Dorsolateral prefrontal cortex (tissue), 120 donors: ENCODE measurements at regions of chr3 and their contacts with region 1.

Region 1: DNA sequence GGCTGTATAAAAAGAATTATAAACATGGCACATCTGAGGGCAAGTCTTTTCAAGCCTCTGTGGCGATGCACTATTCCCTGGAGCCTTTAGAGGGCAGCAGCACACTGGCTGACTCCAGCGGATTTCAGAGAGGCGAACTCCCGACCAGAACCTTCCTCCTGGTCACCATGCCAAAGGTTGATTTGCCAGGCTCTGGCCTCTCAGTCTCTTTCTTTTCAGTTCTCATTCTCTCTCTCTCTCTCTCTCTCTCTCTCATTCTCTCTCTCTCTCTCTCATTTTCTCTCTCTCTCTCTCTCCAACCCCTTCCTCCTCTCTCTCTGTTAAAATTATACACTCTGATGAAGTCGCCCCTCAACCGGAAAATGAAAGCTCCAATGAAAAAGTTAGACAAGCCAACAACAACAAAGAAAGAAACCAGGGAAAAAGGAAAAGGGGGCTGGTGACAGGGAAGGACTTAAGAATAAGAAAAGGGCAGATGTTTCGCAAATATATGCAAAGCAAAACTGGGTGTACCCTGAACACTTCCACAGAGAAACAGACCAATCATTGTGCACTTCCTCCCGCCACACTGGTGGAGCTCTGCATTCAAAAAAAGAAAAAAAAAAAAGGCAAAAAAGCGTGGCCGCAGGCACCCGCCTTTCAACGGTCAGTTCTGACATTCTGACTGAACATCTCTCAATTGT is 90.2 kb downstream of the TIGIT start:
- DNase-seq: peak; percentile 74 to 91 (median 87)
- H3K4me3 ChIP-seq: peak overlapping the region; percentile 9 to 68 (median 51)
- H3K27ac ChIP-seq: peak overlapping the region; percentile 69 to 95 (median 86)
- H3K27me3 ChIP-seq: no peaks in the 10 kb centered on the region
- CTCF ChIP-seq: peak; percentile 81 to 98 (median 92)

Region 2: GRCh38 chr3:114362815-114363214 is 21.2 kb before region 1 on chr3:
- intact Hi-C with region 1: loop called in 1 of 2 experiments (anchors 2 kb)
- DNase-seq: no peak
- H3K4me3 ChIP-seq: no peak overlapping the region
- H3K27ac ChIP-seq: peak overlapping the region in 41 of 59 donors; percentile 3 to 82 (median 55)
- H3K27me3 ChIP-seq: no peaks in the 10 kb centered on the region
- CTCF ChIP-seq: peak; percentile 44 to 86 (median 71)

Region 3: GRCh38 chr3:114418724-114419543 is 34.9 kb after region 1 on chr3:
- intact Hi-C with region 1: loop called (anchors 1 to 5 kb)
- DNase-seq: no peak
- H3K4me3 ChIP-seq: peak overlapping the region in 34 of 59 donors; percentile 1 to 46 (median 16)
- H3K27ac ChIP-seq: peak overlapping the region in 54 of 59 donors; percentile 0 to 80 (median 55)
- H3K27me3 ChIP-seq: no peaks in the 10 kb centered on the region
- CTCF ChIP-seq: peak; percentile 74 to 98 (median 90)

Region 4: DNA sequence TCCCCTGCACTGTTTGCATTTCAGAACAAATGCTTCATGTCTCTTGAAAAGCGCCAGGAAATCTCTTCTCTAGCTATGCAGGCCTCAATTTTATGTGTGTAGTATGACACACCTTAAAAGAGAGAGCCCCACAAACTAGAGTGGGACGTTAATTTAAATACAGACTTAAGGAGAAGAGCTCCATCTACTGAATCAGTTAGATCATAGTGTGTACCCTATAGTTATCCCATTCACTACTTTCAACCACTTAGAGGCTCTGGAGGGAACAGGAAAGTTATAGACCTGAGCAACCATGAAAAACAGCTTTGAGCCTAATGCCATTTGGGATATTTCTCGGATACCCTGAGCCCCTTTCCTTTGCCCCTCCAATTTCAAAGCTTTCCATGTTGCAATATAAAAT is 63.5 kb after region 1 on chr3:
- intact Hi-C with region 1: loop called (anchors 1 to 5 kb)
- DNase-seq: no peak
- H3K4me3 ChIP-seq: peak overlapping the region in 41 of 59 donors; percentile 0 to 76 (median 26)
- H3K27ac ChIP-seq: peak overlapping the region; percentile 53 to 99 (median 96)
- H3K27me3 ChIP-seq: no peaks in the 10 kb centered on the region
- CTCF ChIP-seq: peak in 38 of 56 donors; percentile 12 to 59 (median 38)

Region 5: GRCh38 chr3:114454551-114455251 is 70.7 kb after region 1 on chr3:
- intact Hi-C with region 1: loop called in 1 of 2 experiments (anchors 5 kb)
- DNase-seq: peak in 4 of 10 donors; percentile 29 to 49 (median 42)
- H3K4me3 ChIP-seq: peak overlapping the region; percentile 31 to 76 (median 59)
- H3K27ac ChIP-seq: peak overlapping the region; percentile 36 to 99 (median 96)
- H3K27me3 ChIP-seq: no peaks in the 10 kb centered on the region
- CTCF ChIP-seq: peak in 1 of 56 donors; percentile 9

Region 6: GRCh38 chr3:114527036-114527644 is 143.1 kb after region 1 on chr3:
- intact Hi-C with region 1: loop called in 1 of 2 experiments (anchors 10 kb)
- DNase-seq: no peak
- H3K4me3 ChIP-seq: no peak overlapping the region
- H3K27ac ChIP-seq: no peak overlapping the region
- H3K27me3 ChIP-seq: no peaks in the 10 kb centered on the region
- CTCF ChIP-seq: peak; percentile 35 to 70 (median 56)

Region 7: DNA sequence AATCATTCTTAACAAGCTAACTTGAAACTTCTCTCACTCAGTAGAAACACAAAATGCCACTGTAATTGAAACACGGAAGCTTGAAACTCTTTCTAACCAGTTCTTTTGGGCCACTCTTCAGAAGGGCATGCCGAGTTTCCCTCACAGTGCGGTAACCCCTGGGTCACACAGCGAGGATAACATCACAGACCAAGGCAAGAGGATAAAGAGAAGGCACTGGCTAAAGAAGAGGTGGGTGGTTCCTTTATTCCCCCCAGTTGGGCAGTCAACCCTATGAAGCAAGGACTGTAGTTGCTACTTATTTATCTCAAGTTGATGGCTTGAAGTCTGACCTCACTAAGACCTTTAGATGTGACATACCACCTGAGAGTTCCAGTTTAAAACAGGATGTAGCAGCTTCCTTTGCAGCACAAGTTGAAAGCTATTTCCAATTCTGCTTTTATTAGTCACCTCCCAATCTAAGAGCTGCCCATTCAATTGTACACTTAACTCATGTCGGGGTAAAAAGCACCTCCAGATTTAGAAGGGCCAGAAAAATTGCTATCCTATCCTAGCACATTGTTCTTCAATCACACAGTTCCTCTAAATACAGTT is 182.2 kb after region 1 on chr3:
- intact Hi-C with region 1: no loop called
- DNase-seq: no peak
- H3K4me3 ChIP-seq: no peak overlapping the region
- H3K27ac ChIP-seq: no peak overlapping the region
- H3K27me3 ChIP-seq: no peaks in the 10 kb centered on the region
- CTCF ChIP-seq: no peak

Region 8: DNA sequence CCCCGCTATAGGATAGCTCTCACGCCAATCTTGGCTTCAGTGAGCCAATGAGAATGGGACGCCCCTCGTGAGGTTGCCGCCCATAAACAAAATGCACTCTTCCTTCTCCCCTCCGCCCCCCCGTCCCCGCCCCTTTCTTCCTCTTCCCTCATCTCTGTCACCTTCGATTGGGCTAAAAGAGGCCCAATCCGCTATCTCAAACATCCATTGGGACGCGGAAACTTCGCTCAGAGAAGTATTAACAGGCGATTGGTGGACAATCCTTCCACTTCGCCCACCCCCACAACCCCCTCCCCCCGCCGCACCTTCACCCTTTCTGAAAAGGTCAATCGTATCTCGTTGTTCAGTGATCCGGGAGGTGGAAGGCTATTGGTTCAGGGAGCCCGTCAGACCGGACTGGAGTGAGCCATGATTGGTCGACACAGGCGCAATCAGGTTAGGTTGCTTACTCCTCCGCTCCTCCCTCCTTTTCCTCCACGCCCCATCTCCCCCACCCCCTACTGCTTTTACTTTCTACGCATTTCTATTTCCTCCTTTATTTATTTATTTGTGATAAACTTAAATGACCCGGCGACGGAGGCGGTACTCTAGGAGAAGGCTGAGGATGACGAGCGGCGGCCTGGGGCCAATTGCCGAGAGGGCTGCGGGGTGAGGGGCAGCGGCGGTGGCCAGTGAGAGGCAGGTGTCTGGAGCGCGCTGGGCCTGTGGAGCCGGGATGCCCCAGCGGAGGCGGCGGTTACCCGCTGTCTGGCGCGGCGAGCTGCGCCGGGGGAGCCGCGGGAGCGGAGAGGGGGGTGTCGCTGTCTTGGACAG is 763.5 kb after region 1 on chr3:
- intact Hi-C with region 1: loop called in 1 of 2 experiments (anchors 5 kb)
- DNase-seq: peak; percentile 92 to 100 (median 99)
- H3K4me3 ChIP-seq: peak overlapping the region; percentile 62 to 97 (median 89)
- H3K27ac ChIP-seq: peak overlapping the region; percentile 74 to 99 (median 98)
- H3K27me3 ChIP-seq: no peaks in the 10 kb centered on the region
- CTCF ChIP-seq: peak in 30 of 56 donors; percentile 7 to 40 (median 24)